ENCODE measurements at regions of chr21 and their contacts with region 1.

Region 1: GRCh38 chr21:29499734-29500343 is 201.1 kb downstream of the BACH1 start:
- DNase-seq: no peak
- H3K4me3 ChIP-seq: no peak overlapping the region
- H3K27ac ChIP-seq: no peak overlapping the region
- H3K4me1 ChIP-seq: no peaks in the 10 kb centered on the region
- H3K27me3 ChIP-seq: no peaks in the 10 kb centered on the region
- CTCF ChIP-seq: no peak
- POLR2A ChIP-seq: no peak

Region 2: GRCh38 chr21:30027986-30028385 is 528.1 kb after region 1 on chr21:
- intact Hi-C with region 1: loop called (anchors 5 kb)
- DNase-seq: no peak
- H3K4me3 ChIP-seq: no peak overlapping the region
- H3K27ac ChIP-seq: no peak overlapping the region
- H3K4me1 ChIP-seq: no peaks in the 10 kb centered on the region
- H3K27me3 ChIP-seq: no peaks in the 10 kb centered on the region
- CTCF ChIP-seq: no peak
- POLR2A ChIP-seq: no peak